SK-MEL-5 (cell line): ENCODE measurements at regions of chr9 and their contacts with region 1.

Region 1: DNA sequence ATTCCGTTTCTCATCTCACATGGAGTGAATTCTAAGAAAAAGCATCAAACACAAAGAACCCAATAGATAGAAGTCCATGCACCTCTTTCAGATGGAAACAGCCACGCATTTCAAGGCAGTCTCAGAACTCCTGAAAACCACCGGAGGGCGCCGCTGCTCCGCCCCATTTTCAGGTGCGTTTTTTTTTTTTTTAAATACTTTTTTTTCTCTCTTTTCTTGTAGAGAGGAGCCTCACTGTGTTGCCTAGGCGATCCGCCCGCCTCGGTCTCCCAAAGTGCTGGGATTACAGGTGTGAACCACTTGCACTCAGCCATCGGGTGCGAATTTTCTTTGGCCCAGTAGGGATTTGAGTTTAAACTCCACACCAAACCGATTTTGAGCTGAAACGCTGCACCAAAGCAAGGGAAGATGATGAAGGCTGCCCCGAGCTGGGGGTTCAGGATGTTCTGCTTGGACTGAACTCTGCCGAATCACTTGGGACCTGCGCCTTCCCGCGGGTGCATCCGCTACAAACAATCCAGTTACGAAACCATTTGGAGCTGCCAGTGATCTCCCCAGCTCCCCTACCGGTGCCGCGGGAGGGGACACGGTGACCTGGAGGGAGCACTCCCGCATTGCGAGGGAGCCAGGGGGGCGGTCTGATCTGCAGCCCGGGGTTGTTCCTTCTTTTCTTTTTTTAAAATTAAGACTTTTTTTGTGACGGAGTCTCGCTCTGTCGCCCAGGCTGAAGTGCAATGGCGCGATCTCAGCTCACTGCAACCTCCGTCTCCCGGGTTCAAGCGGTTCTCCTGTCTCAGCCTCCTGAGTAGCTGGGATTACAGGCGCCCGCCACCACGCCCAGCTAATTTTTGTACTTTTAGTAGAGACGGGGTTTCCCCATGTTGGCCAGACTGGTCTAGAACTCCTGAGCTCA is 1.4 kb downstream of the PTGR1 start:
- DNase-seq: peak; percentile 76

Region 2: GRCh38 chr9:111195766-111196165 is 402.3 kb before region 1 on chr9:
- in situ Hi-C with region 1: no loop called
- DNase-seq: no peak

Region 3: DNA sequence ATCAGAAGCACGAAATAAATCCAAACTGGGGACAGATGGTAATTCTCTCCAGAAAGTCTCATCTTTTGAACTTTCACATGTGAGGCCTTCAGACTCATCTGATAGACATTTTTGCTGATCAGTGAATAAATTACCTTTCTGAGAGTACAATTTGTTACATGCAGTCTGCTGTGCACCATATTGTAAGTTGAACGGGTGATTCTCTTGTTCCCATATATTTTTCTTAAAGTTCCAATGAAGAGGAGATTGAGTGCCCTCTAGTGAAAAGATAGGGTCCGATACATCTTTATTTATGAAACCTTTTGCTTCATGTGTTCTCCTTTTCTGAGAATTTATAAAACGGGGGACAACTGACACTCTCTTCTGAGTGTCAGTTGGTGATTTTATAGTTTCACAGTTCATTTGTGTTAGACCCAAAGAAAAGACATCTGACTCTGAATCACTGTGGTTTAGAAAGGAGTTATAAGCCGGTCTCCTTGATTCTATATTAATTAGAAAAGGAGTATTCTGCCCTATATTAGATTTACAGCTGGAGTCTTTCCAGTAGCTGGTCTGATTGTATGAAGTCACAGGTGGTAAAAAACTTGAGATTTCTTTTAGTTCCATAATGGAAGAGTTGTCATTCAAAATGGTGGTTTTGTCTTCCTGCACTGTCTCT is 93.7 kb after region 1 on chr9:
- in situ Hi-C with region 1: loop called (anchors 25 kb)
- DNase-seq: peak; percentile 81